ENCODE measurements at regions of chr9 and their contacts with region 1.

Region 1: DNA sequence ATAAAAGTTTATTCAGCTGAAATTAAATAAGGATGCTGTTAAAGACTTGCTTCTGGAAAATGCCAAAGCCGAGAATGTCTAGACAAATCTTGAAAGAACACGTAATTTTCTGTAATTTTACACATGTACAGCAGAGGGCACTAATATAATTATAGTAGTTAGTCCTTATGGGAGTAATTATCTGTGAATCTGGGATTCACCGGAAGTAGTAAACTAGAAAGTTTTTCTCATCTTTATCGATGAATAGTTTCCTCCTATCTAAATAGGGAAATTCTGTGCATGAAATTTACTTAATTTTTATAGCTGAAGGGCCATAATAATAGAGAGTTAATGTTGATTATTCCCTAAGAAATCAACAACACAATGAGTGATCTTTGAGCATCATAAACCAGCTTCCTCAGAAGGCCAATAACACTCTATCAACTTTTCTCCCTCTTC is 18.4 kb upstream of the CNTLN start:
- DNase-seq: no peak
- H3K4me3 ChIP-seq: no peak overlapping the region
- H3K27ac ChIP-seq: no peak overlapping the region
- H3K27me3 ChIP-seq: no peaks in the 10 kb centered on the region
- CTCF ChIP-seq: peak; percentile 40

Region 2: DNA sequence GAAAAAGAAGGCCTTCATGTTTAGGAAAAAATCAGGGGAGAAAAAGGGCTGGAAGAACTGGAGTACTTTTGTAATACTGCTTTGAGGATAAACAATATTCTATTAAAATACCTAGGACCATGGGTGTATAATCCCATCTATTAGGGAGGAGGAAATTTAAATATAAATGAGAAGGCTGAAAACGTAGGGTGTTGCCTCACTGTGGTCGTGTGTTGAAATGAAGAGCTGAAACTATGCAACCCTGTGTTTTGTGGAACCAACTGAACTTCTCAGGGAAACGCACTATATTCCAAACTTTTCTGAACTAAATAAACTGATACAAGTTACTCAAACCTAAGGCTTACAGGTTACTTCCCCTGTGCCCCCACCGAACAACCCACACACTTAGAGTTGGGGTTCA is 13.9 kb after region 1 on chr9:
- CTCF ChIA-PET with region 1: interaction called, 10 read pairs
- POLR2A ChIA-PET with region 1: no interaction called
- DNase-seq: no peak
- H3K4me3 ChIP-seq: no peak overlapping the region
- H3K27ac ChIP-seq: no peak overlapping the region
- H3K27me3 ChIP-seq: no peaks in the 10 kb centered on the region
- CTCF ChIP-seq: no peak

Region 3: GRCh38 chr9:17402309-17402708 is 285.9 kb after region 1 on chr9:
- CTCF ChIA-PET with region 1: interaction called, 23 read pairs
- POLR2A ChIA-PET with region 1: no interaction called
- DNase-seq: no peak
- H3K4me3 ChIP-seq: no peak overlapping the region
- H3K27ac ChIP-seq: no peak overlapping the region
- H3K27me3 ChIP-seq: no peaks in the 10 kb centered on the region
- CTCF ChIP-seq: no peak

Region 4: DNA sequence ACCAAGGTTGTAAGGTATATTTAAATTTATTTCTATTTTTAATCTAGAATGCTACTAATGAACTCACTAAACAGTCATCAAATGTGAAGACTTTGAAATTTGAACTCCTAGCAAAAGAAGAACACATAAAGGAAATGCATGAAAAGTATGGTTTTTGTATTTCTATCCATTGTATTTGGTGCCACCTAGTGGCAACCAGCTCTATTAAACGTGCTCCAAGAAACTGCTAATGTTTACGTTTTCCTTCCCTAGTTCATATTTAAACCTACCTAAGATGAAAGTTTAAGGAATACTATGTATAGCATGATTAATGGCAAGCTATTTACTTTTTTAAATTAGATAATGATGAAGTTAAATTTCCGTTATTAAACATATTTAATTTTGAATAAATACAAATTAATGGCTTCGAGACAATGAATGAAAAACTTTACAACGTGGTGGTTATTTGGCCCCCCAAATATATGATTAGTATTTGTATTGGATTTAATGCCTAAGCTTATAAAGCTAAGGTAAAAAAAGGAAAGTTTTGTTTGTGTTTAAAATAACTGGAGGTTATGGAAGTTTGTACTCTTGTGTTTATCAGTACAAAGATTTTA is 346.5 kb after region 1 on chr9:
- CTCF ChIA-PET with region 1: interaction called, 91 read pairs
- POLR2A ChIA-PET with region 1: no interaction called
- DNase-seq: peak; percentile 45
- H3K4me3 ChIP-seq: no peak overlapping the region
- H3K27ac ChIP-seq: no peak overlapping the region
- H3K27me3 ChIP-seq: no peaks in the 10 kb centered on the region
- CTCF ChIP-seq: peak; percentile 73

Region 5: GRCh38 chr9:17725399-17726010 is 609.1 kb after region 1 on chr9:
- CTCF ChIA-PET with region 1: no interaction called
- POLR2A ChIA-PET with region 1: no interaction called
- DNase-seq: no peak
- H3K4me3 ChIP-seq: no peak overlapping the region
- H3K27ac ChIP-seq: no peak overlapping the region
- H3K27me3 ChIP-seq: no peaks in the 10 kb centered on the region
- CTCF ChIP-seq: no peak